ENCODE measurements at regions of chr3 and their contacts with region 1.

Region 1: DNA sequence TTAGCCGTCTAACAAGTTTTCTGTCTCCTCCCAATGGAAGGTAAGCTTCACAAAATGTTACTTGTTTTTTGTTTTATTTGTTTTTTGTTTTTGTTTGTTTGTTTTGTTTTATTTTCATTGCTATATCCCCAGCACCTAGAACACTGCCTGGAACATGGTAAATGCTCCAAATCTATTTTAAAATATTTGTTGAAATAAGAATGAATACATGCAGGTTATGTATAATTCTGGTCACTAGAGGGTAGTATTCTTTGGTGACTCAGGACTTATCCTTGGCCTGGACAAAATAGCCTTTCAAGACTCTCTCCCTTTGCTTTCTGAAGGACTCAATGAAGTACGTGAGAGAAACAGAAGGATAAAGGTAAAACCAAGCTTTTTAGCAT is 47.0 kb upstream of the PPP2R3A start:
- DNase-seq: peak; percentile 31
- H3K4me3 ChIP-seq: no peak overlapping the region
- H3K27ac ChIP-seq: no peak overlapping the region
- H3K4me1 ChIP-seq: peaks cover 22% of the 10 kb centered on the region
- H3K27me3 ChIP-seq: no peaks in the 10 kb centered on the region
- CTCF ChIP-seq: peak; percentile 52 to 55

Region 2: DNA sequence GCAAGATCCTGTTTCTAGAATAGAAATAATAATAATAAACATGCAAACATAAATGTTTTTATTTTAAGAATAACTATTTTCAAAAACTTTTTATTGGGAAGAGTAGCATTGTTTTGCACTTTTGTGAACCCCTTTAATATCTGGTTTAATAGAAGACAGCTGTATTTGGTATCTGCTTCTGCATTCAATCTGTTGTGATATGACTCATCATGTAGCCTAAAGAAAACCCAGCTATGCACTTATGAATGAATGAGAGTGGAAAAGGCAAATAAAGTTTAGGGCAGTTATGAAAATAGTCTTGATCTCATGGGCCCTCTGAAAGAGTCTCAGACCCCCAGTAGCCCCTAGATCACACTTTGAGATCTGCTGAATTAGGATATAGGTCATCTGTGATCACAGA is 53.5 kb before region 1 on chr3:
- CTCF ChIA-PET with region 1: no interaction called
- dilution Hi-C with region 1: no loop called
- in situ Hi-C with region 1: no loop called
- intact Hi-C with region 1: no loop called
- DNase-seq: no peak
- H3K4me3 ChIP-seq: no peak overlapping the region
- H3K27ac ChIP-seq: no peak overlapping the region
- H3K4me1 ChIP-seq: no peaks in the 10 kb centered on the region
- H3K27me3 ChIP-seq: no peaks in the 10 kb centered on the region
- CTCF ChIP-seq: no peak

Region 3: GRCh38 chr3:136036306-136036705 is 117.7 kb after region 1 on chr3:
- CTCF ChIA-PET with region 1: no interaction called
- dilution Hi-C with region 1: no loop called
- in situ Hi-C with region 1: loop called in 1 of 2 experiments (anchors 5 kb)
- intact Hi-C with region 1: no loop called
- DNase-seq: no peak
- H3K4me3 ChIP-seq: no peak overlapping the region
- H3K27ac ChIP-seq: no peak overlapping the region
- H3K4me1 ChIP-seq: no peaks in the 10 kb centered on the region
- H3K27me3 ChIP-seq: no peaks in the 10 kb centered on the region
- CTCF ChIP-seq: no peak

Region 4: DNA sequence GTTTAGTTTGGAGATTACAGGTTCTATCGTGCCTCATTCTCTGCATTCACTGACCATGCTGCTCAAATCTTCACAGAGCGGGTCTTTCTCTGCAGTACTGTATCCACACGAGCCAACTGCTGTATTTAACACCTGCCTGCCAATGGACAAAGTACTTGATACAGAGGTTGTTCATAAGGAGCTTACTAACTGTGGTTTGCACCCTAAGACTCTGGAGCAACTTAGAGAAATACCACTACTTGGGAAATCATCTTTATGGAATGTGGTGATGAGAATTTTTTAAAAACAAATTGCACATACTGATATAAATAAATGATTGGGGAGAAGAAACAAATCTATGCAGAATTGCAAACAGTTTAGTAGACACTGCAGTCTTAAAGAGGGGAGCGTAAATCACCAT is 136.9 kb after region 1 on chr3:
- CTCF ChIA-PET with region 1: no interaction called
- dilution Hi-C with region 1: no loop called
- in situ Hi-C with region 1: loop called in 1 of 2 experiments (anchors 5 kb)
- intact Hi-C with region 1: no loop called
- DNase-seq: no peak
- H3K4me3 ChIP-seq: no peak overlapping the region
- H3K27ac ChIP-seq: no peak overlapping the region
- H3K4me1 ChIP-seq: no peaks in the 10 kb centered on the region
- H3K27me3 ChIP-seq: no peaks in the 10 kb centered on the region
- CTCF ChIP-seq: no peak